ENCODE measurements at regions of chr17 and their contacts with region 1.

Region 1: GRCh38 chr17:80663781-80664206 is 119.2 kb downstream of the RPTOR start:
- DNase-seq: peak; percentile 76
- ATAC-seq: peak; percentile 83
- H3K4me3 Mint-ChIP-seq: peak overlapping the region; percentile 61
- H3K27ac Mint-ChIP-seq: peak overlapping the region; percentile 96
- H3K4me1 Mint-ChIP-seq: peaks cover 77% of the 10 kb centered on the region
- H3K27me3 Mint-ChIP-seq: no peaks in the 10 kb centered on the region

Region 2: GRCh38 chr17:80212962-80213642 is 450.7 kb before region 1 on chr17:
- CTCF ChIA-PET with region 1: no interaction called
- POLR2A ChIA-PET with region 1: no interaction called
- intact Hi-C with region 1: no loop called
- DNase-seq: no peak
- ATAC-seq: no peak
- H3K4me3 Mint-ChIP-seq: no peak overlapping the region
- H3K27ac Mint-ChIP-seq: no peak overlapping the region
- H3K4me1 Mint-ChIP-seq: peaks cover 8% of the 10 kb centered on the region
- H3K27me3 Mint-ChIP-seq: no peaks in the 10 kb centered on the region

Region 3: DNA sequence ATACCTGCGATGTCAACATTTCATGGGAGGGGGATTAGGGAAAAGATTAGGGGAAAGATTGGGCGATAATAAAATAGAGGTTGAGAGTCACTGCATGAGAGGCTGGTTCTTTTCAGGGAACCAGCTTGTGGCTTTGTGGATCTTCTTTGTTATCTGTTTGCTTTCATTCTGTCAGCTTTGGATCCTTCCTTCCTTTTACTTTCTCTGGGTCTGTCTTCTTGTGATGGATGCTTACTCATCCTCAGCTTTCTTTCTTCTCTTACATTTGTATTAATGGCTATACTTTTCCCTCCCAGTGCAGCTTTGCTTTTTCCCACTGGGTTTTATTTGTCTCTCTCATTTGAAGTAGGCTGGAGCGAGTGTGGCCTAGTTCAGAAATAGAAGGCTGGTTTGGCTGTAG is 72.0 kb before region 1 on chr17:
- CTCF ChIA-PET with region 1: no interaction called
- POLR2A ChIA-PET with region 1: no interaction called
- intact Hi-C with region 1: loop called in 1 of 2 experiments (anchors 2 kb)
- DNase-seq: no peak
- ATAC-seq: peak; percentile 56
- H3K4me3 Mint-ChIP-seq: no peak overlapping the region
- H3K27ac Mint-ChIP-seq: peak overlapping the region; percentile 28
- H3K4me1 Mint-ChIP-seq: peaks cover 68% of the 10 kb centered on the region
- H3K27me3 Mint-ChIP-seq: no peaks in the 10 kb centered on the region

Region 4: DNA sequence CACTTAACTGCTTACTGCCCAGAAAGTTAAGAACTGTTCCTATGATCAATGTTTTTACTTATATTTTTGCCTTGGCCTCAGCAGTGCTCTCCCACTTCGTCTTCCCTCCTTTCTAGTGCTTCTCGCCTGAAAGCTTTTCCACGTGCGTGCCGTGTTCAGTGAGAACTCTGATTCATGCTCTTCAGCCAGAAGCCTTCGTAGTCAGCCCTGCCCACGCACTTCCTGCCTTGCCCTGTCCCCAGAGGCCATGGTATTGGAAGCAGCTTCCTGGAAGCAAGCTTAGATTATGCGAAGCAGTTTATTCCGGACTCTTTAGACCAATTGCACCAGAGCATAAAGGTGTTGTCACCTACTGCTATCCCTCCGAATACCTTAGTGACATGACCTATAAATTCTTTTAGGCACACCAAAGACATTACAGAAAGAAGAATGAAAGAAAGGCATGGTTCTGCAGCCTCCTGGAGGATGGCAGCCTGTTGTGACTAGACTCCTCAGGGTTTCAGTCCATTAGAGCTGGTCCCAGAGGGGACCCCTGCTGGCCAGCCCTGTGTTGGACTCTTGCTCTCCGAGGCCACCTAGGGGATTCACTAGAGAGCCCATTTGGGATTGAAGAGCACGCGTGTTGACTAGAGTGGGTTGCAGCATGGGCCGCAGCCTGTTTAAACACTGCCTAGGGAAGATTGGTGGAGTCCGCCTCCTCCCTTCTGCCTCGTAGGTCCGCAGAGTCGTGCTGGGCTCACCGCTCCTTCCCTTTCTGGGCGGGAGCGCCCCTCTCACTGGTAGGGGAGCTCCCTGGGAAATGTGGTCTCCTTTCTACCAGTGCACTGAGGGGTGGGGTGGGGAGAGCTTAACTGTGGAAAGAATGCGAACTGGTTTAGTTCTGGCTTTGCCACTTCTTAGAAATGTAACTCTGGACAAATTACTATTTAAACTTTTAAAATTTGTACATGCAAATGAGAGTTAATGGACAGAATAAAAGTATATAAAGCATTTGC is 13.8 kb before region 1 on chr17:
- CTCF ChIA-PET with region 1: interaction called, 5 read pairs
- POLR2A ChIA-PET with region 1: no interaction called
- intact Hi-C with region 1: loop called in 1 of 2 experiments (anchors 1 kb)
- DNase-seq: peak; percentile 92
- ATAC-seq: peak; percentile 85
- H3K4me3 Mint-ChIP-seq: peak overlapping the region; percentile 17
- H3K27ac Mint-ChIP-seq: peak overlapping the region; percentile 92
- H3K4me1 Mint-ChIP-seq: peaks cover 69% of the 10 kb centered on the region
- H3K27me3 Mint-ChIP-seq: no peaks in the 10 kb centered on the region

Region 5: DNA sequence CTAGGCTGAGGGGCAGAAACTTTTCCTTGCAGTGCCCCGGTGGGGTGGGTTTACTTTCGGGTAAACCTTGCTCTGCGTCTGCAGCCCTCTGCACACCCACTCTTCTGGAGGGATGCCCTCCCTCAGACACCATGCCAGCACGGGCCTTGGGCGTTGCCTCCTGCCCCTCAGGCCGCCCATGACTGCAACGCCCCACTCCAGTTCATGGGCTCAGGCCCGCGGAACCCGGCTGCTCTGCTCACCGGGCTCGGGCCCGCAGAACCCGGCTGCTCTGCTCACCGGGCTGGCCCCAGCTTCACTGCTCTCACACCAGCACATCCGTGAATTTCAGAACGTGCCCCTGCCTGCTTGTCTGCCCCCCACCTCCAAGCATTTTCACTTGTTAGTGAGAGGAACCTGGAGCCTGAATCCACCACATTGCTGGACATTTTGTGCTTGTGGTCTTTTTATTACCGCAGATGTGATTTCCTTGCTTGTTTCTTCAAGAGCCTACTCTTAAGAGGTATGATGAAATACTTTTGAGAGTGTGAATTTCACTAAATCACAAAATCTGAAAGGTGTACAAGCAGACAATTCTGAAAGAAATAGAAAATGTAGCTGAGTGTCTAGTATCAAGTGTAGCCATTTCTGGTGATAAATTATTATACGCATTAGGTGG is 11.8 kb after region 1 on chr17:
- CTCF ChIA-PET with region 1: no interaction called
- POLR2A ChIA-PET with region 1: no interaction called
- intact Hi-C with region 1: no loop called
- DNase-seq: no peak
- ATAC-seq: no peak
- H3K4me3 Mint-ChIP-seq: no peak overlapping the region
- H3K27ac Mint-ChIP-seq: peak overlapping the region; percentile 79
- H3K4me1 Mint-ChIP-seq: peaks cover 74% of the 10 kb centered on the region
- H3K27me3 Mint-ChIP-seq: no peaks in the 10 kb centered on the region

Measured in activated CD4-positive, alpha-beta T cell treated with anti-CD3 and anti-CD28 coated beads for 36 hours (primary cell).